Right lobe of liver (tissue), 6 donors: ENCODE measurements at regions of chr21 and their contacts with region 1.

Region 1: DNA sequence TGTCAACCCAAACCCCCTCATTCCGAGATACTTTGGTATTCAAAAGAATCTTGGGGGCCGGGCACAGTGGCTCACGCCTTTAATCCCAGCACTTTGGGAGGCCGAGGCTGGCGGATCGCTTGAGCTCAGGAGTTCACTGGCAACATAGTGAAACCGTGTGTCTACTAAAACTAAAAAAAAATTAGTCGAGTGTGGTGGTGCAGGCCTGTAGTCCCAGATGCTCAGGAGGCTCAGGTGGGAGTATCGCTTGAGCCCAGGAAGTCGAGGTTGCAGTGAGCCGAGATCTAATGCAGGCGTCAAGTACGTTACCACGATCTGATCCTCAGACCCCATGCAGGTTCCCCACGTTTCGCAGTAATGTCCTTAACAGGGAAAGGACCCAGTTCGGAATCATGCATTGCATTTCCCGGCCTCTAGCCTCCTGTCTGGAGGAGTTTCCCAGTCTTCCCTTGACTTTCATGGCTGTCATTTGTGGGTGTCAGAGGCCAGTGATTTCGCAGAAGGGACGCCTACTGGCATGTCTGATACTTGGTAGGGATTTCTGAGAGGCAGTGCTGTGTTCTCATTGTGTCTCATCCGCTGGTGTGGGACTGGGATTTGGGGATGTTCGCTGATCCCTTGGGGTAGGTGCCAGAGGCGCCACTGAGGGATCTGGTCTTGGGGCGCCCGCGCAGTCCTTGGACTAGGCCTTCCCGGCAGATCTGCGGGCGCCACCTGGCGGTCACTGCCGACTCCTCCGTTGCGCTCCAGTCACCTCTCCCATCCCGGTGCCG is 39.3 kb upstream of the HMGN1 start:
- DNase-seq: peak; percentile 93 to 95 (median 94)
- ATAC-seq: peak; percentile 73 to 78 (median 74)
- H3K4me3 ChIP-seq: peak overlapping the region; percentile 35 to 55 (median 52)
- H3K27ac ChIP-seq: peak overlapping the region; percentile 19 to 51 (median 32)
- H3K4me1 ChIP-seq: peaks cover 0 to 19% (median 5%) of the 10 kb centered on the region in 4 donors
- H3K27me3 ChIP-seq: no peaks in the 10 kb centered on the region
- CTCF ChIP-seq: peak; percentile 82 to 97 (median 96)
- POLR2A ChIP-seq: no peak

Region 2: GRCh38 chr21:38755681-38756371 is 632.4 kb before region 1 on chr21:
- intact Hi-C with region 1: no loop called
- DNase-seq: no peak
- ATAC-seq: peak; percentile 71 to 86 (median 74)
- H3K4me3 ChIP-seq: no peak overlapping the region
- H3K27ac ChIP-seq: peak overlapping the region in 2 of 3 donors; percentile 17 to 34
- H3K4me1 ChIP-seq: no peaks in the 10 kb centered on the region
- H3K27me3 ChIP-seq: no peaks in the 10 kb centered on the region
- CTCF ChIP-seq: no peak
- POLR2A ChIP-seq: no peak

Region 3: DNA sequence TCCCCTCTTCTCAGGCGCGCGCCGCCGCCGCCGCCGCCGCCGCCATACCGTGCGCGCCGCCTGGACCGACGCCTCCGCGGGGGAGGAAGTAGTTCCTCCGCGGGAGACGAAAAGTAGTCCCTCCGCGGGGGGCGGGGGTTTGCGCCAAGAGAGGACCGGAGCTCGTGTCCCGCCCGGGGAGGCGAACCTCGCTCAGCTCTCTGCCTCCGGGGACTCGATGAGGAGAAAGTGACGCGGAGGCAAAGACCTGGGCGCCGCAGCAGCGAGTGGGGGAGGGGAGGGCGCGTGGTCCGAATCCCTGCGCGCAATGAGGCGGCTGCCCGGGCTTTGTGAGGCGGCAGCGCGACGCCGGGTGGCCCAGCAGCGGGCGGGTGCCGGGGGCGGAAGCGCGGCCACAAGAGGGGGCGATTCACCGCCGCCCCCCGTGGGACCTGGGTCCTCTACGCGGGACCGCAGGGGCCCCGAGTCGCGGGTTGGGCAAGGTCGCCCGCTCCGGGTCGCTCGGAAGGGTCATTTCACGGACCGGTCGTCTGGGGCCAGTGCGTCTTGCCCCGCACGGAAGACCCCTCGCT is 74.6 kb before region 1 on chr21 and contains the start of gene BRWD1:
- intact Hi-C with region 1: loop called in 1 of 2 experiments (anchors 10 kb)
- DNase-seq: peak; percentile 82 to 83 (median 82)
- ATAC-seq: peak; percentile 61 to 81 (median 75)
- H3K4me3 ChIP-seq: peak within 1 kb of the TSS; percentile 81 to 88 (median 86)
- H3K27ac ChIP-seq: peak within 1 kb of the TSS; percentile 93 to 99 (median 93)
- H3K4me1 ChIP-seq: peaks cover 0 to 16% (median 4%) of the 10 kb centered on the region in 4 donors
- H3K27me3 ChIP-seq: no peaks in the 10 kb centered on the region
- CTCF ChIP-seq: peak; percentile 17 to 38 (median 26)
- POLR2A ChIP-seq: peak; percentile 83
- total RNA-seq, gene BRWD1: 18.6 to 26.7 (median 21.9) TPM